ENCODE measurements at regions of chr1 and their contacts with region 1.

Region 1: GRCh38 chr1:38026592-38027200 is 14.2 kb downstream of the UTP11 start:
- DNase-seq: no peak
- ATAC-seq: no peak
- H3K4me3 Mint-ChIP-seq: no peak overlapping the region
- H3K27ac Mint-ChIP-seq: no peak overlapping the region
- H3K4me1 Mint-ChIP-seq: peaks cover 39% of the 10 kb centered on the region
- H3K27me3 Mint-ChIP-seq: no peaks in the 10 kb centered on the region
- CTCF ChIP-seq: no peak

Region 2: DNA sequence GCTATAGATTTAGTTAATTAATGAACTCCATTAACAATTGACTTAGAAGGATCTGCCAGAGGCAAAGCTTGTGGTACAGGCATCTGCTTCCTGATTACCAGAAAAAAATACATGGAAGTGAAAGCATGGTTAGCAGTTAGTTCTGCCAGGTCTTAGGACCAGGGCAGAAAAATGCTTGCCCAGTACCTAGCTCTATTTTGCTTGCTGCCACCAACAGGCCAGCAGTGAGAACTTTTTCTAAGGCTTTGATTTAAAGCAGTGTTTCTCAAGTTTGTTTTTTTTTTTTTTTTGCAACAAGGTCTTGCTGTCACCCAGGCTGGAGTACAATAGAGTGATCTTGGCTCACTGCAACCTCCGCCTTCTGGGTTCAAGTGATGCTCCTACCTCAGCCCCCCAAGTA is 150.9 kb before region 1 on chr1:
- CTCF ChIA-PET with region 1: no interaction called
- POLR2A ChIA-PET with region 1: no interaction called
- intact Hi-C with region 1: no loop called
- DNase-seq: no peak
- ATAC-seq: no peak
- H3K4me3 Mint-ChIP-seq: no peak overlapping the region
- H3K27ac Mint-ChIP-seq: no peak overlapping the region
- H3K4me1 Mint-ChIP-seq: no peaks in the 10 kb centered on the region
- H3K27me3 Mint-ChIP-seq: no peaks in the 10 kb centered on the region
- CTCF ChIP-seq: no peak

Region 3: GRCh38 chr1:38071312-38072256 is 44.9 kb after region 1 on chr1:
- CTCF ChIA-PET with region 1: interaction called, 43 read pairs
- POLR2A ChIA-PET with region 1: interaction called, 5 read pairs
- intact Hi-C with region 1: loop called (anchors 1 kb)
- DNase-seq: no peak
- ATAC-seq: peak; percentile 82
- H3K4me3 Mint-ChIP-seq: no peak overlapping the region
- H3K27ac Mint-ChIP-seq: no peak overlapping the region
- H3K4me1 Mint-ChIP-seq: peaks cover 4% of the 10 kb centered on the region
- H3K27me3 Mint-ChIP-seq: peaks cover 4% of the 10 kb centered on the region
- CTCF ChIP-seq: no peak

Region 4: DNA sequence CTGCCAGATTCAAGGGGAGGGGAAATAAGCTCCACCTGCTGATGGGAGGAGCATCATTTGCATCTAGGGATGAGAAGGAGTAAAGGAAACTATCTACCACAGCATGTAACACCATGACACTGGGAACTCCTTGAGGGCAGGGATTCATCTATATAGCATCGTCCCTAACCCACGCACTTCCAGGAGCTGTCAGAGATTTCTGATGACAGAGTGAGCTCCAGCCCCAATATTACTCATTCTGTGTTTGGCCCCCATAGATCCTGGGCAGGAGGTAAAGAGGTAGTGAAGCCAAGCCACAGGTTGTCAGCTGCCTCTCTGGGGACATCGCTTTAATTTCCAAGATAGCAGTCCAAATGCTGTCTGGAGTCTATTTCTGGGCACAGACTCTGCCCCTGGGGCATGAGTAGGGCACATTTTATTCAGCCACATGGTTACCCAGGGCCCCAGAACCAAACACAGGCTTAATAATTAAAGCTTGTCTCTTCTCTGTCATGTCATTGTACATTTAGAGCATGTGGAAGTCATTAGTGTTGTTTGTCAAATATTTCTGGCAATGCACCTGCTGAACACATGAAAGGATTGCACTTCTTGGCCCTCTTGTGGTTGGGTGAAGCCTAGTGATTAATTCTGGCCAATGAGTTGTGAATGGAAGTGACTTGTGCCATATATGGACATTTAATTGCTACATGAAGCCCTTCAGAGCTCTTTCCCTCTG is 125.8 kb after region 1 on chr1:
- CTCF ChIA-PET with region 1: interaction called, 5 read pairs
- POLR2A ChIA-PET with region 1: no interaction called
- intact Hi-C with region 1: loop called (anchors 5 kb)
- DNase-seq: no peak
- ATAC-seq: peak; percentile 74
- H3K4me3 Mint-ChIP-seq: peak overlapping the region; percentile 4
- H3K27ac Mint-ChIP-seq: peak overlapping the region; percentile 80
- H3K4me1 Mint-ChIP-seq: peaks cover 43% of the 10 kb centered on the region
- H3K27me3 Mint-ChIP-seq: no peaks in the 10 kb centered on the region
- CTCF ChIP-seq: no peak

Region 5: GRCh38 chr1:38502758-38503157 is 476.1 kb after region 1 on chr1:
- CTCF ChIA-PET with region 1: interaction called, 9 read pairs
- POLR2A ChIA-PET with region 1: interaction called, 3 read pairs
- intact Hi-C with region 1: loop called (anchors 1 kb)
- DNase-seq: no peak
- ATAC-seq: peak; percentile 73
- H3K4me3 Mint-ChIP-seq: no peak overlapping the region
- H3K27ac Mint-ChIP-seq: no peak overlapping the region
- H3K4me1 Mint-ChIP-seq: peaks cover 18% of the 10 kb centered on the region
- H3K27me3 Mint-ChIP-seq: peaks cover 16% of the 10 kb centered on the region
- CTCF ChIP-seq: no peak

Region 6: GRCh38 chr1:38586993-38587646 is 560.4 kb after region 1 on chr1:
- CTCF ChIA-PET with region 1: no interaction called
- POLR2A ChIA-PET with region 1: no interaction called
- intact Hi-C with region 1: loop called (anchors 2 kb)
- DNase-seq: peak; percentile 46
- ATAC-seq: peak; percentile 83
- H3K4me3 Mint-ChIP-seq: no peak overlapping the region
- H3K27ac Mint-ChIP-seq: peak overlapping the region; percentile 33
- H3K4me1 Mint-ChIP-seq: peaks cover 13% of the 10 kb centered on the region
- H3K27me3 Mint-ChIP-seq: no peaks in the 10 kb centered on the region
- CTCF ChIP-seq: no peak

Region 7: DNA sequence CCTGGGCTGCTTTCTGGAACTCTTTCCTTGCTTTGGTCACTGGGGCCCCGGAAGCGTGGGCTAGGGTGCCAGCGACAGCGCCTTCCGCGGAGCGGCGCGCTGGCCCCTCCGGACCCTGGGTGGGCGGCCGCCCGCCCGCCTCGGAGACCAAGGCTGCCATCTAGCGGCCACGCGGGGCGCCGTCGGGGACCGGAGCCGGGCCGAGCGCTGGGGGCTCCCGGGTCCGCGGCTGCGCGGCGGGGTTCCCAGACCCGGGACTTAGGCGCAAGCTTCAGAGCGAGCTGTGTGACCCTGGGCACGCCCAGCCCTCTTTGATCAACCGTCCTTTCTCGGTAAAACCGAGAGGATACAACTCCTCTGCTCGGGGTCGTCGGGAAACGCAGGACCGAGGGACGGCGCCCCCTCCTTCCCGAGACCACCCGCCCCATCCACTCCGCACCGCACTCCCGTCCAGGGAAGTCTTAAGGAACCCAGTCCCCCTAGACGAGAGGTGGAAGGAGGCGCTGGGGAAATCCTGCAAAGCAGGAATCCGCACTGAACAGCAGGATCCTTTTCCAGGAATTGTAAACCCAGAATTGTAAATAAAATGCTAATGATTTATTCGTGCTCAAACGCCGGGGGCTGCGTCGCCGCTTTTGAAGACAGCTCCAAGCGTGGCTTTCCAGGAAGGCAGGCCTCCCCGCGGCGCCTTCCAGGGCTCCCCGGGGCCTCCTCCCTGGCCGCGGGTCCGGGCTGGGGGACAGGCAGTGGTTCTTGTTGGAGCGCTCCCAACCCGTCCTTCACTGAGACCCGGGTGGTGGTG is 791.7 kb after region 1 on chr1:
- CTCF ChIA-PET with region 1: no interaction called
- POLR2A ChIA-PET with region 1: no interaction called
- intact Hi-C with region 1: loop called (anchors 1 kb)
- DNase-seq: peak; percentile 64
- ATAC-seq: peak; percentile 72
- H3K4me3 Mint-ChIP-seq: no peak overlapping the region
- H3K27ac Mint-ChIP-seq: no peak overlapping the region
- H3K4me1 Mint-ChIP-seq: peaks cover 21% of the 10 kb centered on the region
- H3K27me3 Mint-ChIP-seq: peaks cover 67% of the 10 kb centered on the region
- CTCF ChIP-seq: no peak

Region 8: GRCh38 chr1:38834937-38835827 is 808.5 kb after region 1 on chr1:
- CTCF ChIA-PET with region 1: interaction called, 16 read pairs
- POLR2A ChIA-PET with region 1: no interaction called
- intact Hi-C with region 1: loop called (anchors 2 kb)
- DNase-seq: no peak
- ATAC-seq: peak; percentile 82
- H3K4me3 Mint-ChIP-seq: no peak overlapping the region
- H3K27ac Mint-ChIP-seq: no peak overlapping the region
- H3K4me1 Mint-ChIP-seq: peaks cover 7% of the 10 kb centered on the region
- H3K27me3 Mint-ChIP-seq: peaks cover 10% of the 10 kb centered on the region
- CTCF ChIP-seq: no peak

Measured in activated B cell treated with CpG ODN at 0.5 μM for 24 hours (primary cell).